Activated naive CD4-positive, alpha-beta T cell treated with anti-CD3 and anti-CD28 coated beads, Interleukin-2, amount 10 ng/mL, durations not matched to agents 7 days and 5 days (primary cell): ENCODE measurements at regions of chr4 and their contacts with region 1.

Region 1: DNA sequence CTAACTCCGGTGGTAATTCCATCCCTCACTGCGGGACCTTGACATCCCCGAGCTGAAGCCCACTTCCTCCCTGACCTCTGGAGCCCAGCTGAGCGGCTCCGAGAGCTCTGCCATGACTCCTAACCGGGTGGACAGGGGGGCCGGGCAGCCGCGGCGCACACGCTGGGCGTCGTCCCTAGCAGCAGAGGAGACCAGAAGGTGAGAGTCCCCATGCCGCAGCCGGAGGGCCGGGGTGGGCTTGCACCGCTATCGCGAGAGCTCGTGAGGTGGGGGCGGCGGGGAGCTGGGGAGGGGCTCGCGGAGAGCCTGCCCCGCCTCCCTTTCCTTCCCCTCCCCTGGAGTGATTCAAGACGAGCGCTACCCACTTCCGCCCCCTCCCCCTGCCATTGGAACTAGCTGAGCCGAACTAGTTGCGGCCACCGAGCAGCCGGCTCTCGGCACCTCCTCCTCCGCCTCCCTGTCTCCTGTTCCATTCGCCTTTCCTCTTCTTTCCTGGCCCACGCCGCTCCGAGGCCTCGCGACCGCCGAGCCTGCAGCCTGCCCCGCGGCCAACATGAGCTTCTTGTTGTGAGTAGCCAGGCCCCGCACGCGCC is at the start of gene MOB1B:
- DNase-seq: peak; percentile 93
- H3K4me3 Mint-ChIP-seq: peak within 1 kb of the TSS; percentile 98
- H3K27ac Mint-ChIP-seq: peak within 1 kb of the TSS; percentile 90
- H3K4me1 Mint-ChIP-seq: peaks cover 29% of the 10 kb centered on the region
- H3K27me3 Mint-ChIP-seq: no peaks in the 10 kb centered on the region

Region 2: DNA sequence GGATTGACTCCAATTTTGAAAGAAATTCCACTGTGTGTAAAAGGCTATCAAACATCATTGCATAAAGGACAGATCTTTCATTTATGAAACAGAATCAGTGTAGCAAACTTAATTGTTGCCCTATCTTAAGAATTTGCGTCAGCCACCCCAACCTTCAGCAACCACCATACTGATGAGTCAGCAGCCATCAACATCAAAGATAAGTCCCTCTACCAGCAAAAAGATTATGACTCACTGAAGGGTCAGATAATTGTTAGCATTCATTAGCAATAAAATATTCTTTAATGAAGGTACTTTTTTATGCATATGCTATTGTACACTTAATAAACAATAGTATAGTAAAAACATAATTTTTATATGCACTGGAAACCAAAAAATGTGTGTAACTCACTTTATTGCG is 46.6 kb before region 1 on chr4:
- CTCF ChIA-PET with region 1: no interaction called
- DNase-seq: no peak
- H3K4me3 Mint-ChIP-seq: no peak overlapping the region
- H3K27ac Mint-ChIP-seq: no peak overlapping the region
- H3K4me1 Mint-ChIP-seq: peaks cover 5% of the 10 kb centered on the region
- H3K27me3 Mint-ChIP-seq: no peaks in the 10 kb centered on the region

Region 3: GRCh38 chr4:71009890-71010588 is 108.0 kb after region 1 on chr4:
- CTCF ChIA-PET with region 1: interaction called, 13 read pairs
- DNase-seq: no peak
- H3K4me3 Mint-ChIP-seq: no peak overlapping the region
- H3K27ac Mint-ChIP-seq: peak overlapping the region; percentile 38
- H3K4me1 Mint-ChIP-seq: peaks cover 45% of the 10 kb centered on the region
- H3K27me3 Mint-ChIP-seq: no peaks in the 10 kb centered on the region